ENCODE measurements at regions of chr1 and their contacts with region 1.

Region 1: DNA sequence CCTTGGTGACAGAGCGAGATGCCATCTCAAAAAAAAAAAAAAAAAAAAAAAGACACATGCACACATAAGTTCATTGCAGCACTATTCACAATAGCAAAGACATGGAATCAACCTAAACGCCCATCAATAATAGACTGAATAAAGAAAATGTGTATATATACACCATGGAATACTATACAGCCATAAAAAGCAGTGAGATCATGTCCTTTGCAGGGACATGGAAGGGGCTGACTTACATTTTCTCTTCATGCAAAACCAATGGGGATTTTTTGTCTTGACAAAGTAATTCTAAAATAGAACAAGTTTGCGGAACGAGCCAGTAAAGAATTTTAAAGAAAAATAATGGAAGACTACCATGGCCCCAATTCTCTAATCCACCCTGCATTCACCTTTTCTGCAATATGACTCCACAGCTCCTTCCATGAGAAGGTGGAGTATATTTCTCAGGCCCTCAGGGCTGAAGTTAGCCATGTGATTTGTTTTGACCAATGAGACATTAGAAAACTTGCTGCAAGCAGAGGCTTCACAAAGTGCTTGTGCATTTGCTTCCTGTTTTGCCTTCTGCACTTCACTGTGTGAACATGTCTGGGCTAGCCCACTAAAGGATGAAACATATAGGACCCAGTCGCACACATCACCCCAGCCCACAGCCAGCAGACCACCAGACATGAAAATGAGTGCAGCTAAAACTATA is 78.8 kb upstream of the NR5A2 start:
- DNase-seq: no peak
- H3K4me3 ChIP-seq: no peak overlapping the region
- H3K27ac ChIP-seq: no peak overlapping the region
- H3K4me1 ChIP-seq: no peaks in the 10 kb centered on the region
- H3K27me3 ChIP-seq: no peaks in the 10 kb centered on the region
- CTCF ChIP-seq: no peak
- POLR2A ChIP-seq: no peak

Region 2: GRCh38 chr1:200107004-200107470 is 158.3 kb after region 1 on chr1:
- intact Hi-C with region 1: loop called (anchors 10 kb)
- DNase-seq: no peak
- H3K4me3 ChIP-seq: no peak overlapping the region
- H3K27ac ChIP-seq: no peak overlapping the region
- H3K4me1 ChIP-seq: no peaks in the 10 kb centered on the region
- H3K27me3 ChIP-seq: no peaks in the 10 kb centered on the region
- CTCF ChIP-seq: no peak
- POLR2A ChIP-seq: no peak

Measured in vagina (tissue), 2 donors.